Aorta (tissue), 5 donors: ENCODE measurements at regions of chr5 and their contacts with region 1.

Region 1: GRCh38 chr5:88883059-88883835 is at the start of gene MEF2C:
- DNase-seq: peak; percentile 81 to 92
- ATAC-seq: peak; percentile 90
- H3K4me3 ChIP-seq: peak within 1 kb of the TSS; percentile 100
- H3K27ac ChIP-seq: peak within 1 kb of the TSS; percentile 73 to 99
- H3K4me1 ChIP-seq: peaks cover 0 to 1% of the 10 kb centered on the region in 2 donors
- H3K27me3 ChIP-seq: no peaks in the 10 kb centered on the region
- total RNA-seq, gene MEF2C: 137 to 186 TPM

Region 2: GRCh38 chr5:88785391-88786219 is 97.6 kb before region 1 on chr5:
- intact Hi-C with region 1: loop called (anchors 5 kb)
- DNase-seq: no peak
- ATAC-seq: peak; percentile 93
- H3K4me3 ChIP-seq: peak overlapping the region in 1 of 2 donors; percentile 33
- H3K27ac ChIP-seq: peak overlapping the region; percentile 54 to 96
- H3K4me1 ChIP-seq: peaks cover 0 to 2% of the 10 kb centered on the region in 2 donors
- H3K27me3 ChIP-seq: no peaks in the 10 kb centered on the region

Region 3: DNA sequence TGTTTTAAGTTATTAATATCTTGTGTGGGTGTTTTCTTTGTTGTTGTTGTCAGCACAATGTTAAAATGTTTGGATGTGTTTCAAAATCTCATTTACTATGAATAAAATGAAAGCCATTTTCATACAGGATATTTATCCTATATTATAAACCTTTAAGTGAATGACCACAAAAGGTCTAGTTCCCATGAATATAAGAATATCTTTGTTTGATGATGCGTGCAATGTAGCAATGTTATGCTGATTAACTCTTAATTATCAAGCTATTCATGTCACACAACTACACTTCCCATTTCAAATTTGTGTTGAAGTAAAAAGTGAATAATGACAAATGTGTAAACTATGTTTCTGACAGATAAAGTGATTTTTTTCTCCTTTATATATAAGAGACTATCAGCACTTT is 60.0 kb before region 1 on chr5:
- intact Hi-C with region 1: no loop called
- DNase-seq: no peak
- ATAC-seq: no peak
- H3K4me3 ChIP-seq: no peak overlapping the region
- H3K27ac ChIP-seq: no peak overlapping the region
- H3K4me1 ChIP-seq: peaks cover 3 to 5% of the 10 kb centered on the region in 2 donors
- H3K27me3 ChIP-seq: no peaks in the 10 kb centered on the region

Region 4: DNA sequence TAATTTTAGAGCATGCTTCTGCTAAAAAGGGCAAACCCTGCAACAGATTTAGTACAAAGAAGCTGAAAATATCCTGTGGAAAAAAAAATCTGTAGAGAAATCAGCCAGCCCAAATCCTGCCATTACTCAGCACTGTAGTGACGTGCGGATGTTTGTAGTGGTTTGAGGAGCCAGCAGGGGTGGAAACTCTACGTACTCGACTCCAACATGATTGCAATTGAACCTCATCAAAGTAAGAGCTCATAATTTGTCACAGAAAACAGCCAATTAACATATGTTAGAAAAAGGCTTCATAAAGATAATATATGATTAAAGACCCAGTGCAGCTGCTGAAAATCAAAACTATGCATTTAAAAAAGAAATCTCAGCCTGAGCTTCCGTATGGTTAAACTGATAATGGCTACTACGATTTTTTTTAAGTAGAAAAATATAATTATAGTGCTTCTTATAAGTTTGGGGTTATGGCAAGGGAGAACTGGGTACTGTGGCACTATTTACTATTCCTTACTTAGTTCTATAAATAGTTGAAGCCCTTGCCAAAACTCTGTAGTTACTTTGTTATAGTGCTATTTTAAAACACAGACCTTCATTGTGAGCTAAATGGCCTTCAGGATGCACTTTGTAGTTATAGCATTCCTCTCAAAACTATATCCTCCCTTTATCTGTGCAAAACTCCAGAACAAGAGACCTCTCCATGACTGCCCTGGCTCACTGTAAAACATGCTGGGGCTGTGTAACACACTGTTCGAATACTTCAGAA is 49.7 kb before region 1 on chr5:
- intact Hi-C with region 1: loop called (anchors 1 to 5 kb)
- DNase-seq: peak in 1 of 2 donors; percentile 58
- ATAC-seq: peak; percentile 87
- H3K4me3 ChIP-seq: peak overlapping the region in 1 of 2 donors; percentile 82
- H3K27ac ChIP-seq: peak overlapping the region; percentile 71 to 93
- H3K4me1 ChIP-seq: peaks cover 9% of the 10 kb centered on the region in 2 donors
- H3K27me3 ChIP-seq: no peaks in the 10 kb centered on the region

Region 5: GRCh38 chr5:88845081-88845697 is 38.1 kb before region 1 on chr5:
- intact Hi-C with region 1: no loop called
- DNase-seq: no peak
- ATAC-seq: no peak
- H3K4me3 ChIP-seq: no peak overlapping the region
- H3K27ac ChIP-seq: no peak overlapping the region
- H3K4me1 ChIP-seq: peaks cover 0 to under 1% of the 10 kb centered on the region in 2 donors
- H3K27me3 ChIP-seq: no peaks in the 10 kb centered on the region

Region 6: DNA sequence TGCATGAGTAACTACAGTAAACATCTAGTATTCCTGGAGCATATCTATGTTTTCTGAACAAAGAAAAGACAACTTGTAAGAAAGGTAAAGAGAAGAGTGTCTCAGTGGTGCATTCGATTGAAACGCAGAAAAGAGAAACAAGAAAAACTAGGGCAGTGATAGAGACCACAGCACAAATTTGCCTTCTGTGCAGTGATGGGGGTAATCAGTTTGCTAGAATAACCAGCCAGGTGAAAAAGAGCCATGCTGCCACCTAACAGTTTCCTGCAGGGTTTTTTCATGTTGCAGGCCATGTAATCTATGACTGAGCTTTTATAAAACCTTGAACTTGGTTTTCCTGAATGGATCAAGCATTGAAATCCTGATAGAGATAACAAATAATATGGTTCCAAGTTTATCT is 198.1 kb after region 1 on chr5:
- intact Hi-C with region 1: loop called (anchors 2 to 10 kb)
- DNase-seq: no peak
- ATAC-seq: no peak
- H3K4me3 ChIP-seq: no peak overlapping the region
- H3K27ac ChIP-seq: no peak overlapping the region
- H3K4me1 ChIP-seq: peaks cover 0 to 2% of the 10 kb centered on the region in 2 donors
- H3K27me3 ChIP-seq: no peaks in the 10 kb centered on the region

Region 7: GRCh38 chr5:89187883-89188465 is 304.7 kb after region 1 on chr5:
- intact Hi-C with region 1: no loop called
- DNase-seq: no peak
- ATAC-seq: no peak
- H3K4me3 ChIP-seq: no peak overlapping the region
- H3K27ac ChIP-seq: no peak overlapping the region
- H3K4me1 ChIP-seq: peaks cover 0 to 2% of the 10 kb centered on the region in 2 donors
- H3K27me3 ChIP-seq: no peaks in the 10 kb centered on the region

Region 8: GRCh38 chr5:89457411-89458331 is 574.4 kb after region 1 on chr5:
- intact Hi-C with region 1: loop called in 1 of 2 experiments (anchors 10 kb)
- DNase-seq: peak; percentile 79 to 81
- ATAC-seq: peak; percentile 92
- H3K4me3 ChIP-seq: no peak overlapping the region
- H3K27ac ChIP-seq: peak overlapping the region; percentile 17 to 51
- H3K4me1 ChIP-seq: no peaks in the 10 kb centered on the region
- H3K27me3 ChIP-seq: no peaks in the 10 kb centered on the region

Region 9: DNA sequence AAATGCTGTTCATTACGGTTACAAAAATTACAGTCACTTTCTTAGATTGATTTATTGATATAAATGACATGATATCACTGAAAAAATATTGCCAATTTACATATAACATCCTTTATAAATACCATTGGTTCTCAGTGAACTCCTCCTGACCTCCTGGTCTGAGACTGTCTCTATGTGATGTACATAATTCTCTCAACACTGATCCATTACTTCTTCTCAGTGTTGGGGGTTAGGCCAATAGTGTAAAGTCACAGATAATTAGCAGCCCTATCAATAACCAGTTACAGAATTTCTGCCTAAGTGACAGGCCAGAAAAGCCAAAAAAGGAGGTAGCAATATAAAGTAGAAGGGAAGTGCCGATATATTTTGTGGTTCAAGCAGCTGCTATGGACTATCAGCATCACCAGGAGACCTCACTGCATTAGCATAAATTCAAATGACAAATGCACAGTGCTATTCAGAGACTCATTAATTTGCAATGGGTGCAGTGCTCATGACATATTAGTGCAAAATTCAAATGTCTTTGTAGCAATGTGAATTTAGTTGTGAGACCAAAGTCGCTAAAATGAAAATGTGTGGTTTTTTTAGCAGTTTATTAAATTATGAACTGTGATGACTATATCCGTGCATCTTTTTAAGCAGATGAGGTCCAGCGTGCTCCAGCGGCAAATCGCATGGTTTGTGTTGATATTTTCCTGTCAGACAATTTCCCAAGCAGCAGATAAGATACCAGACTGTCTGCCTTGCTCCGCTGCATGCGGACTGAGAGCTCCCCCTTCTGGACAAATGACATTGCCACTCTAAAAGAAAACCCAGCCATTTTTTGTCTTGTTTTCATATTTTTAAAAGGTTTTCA is 1381.7 kb after region 1 on chr5:
- intact Hi-C with region 1: loop called (anchors 5 to 10 kb)
- DNase-seq: peak; percentile 67 to 80
- ATAC-seq: peak; percentile 84
- H3K4me3 ChIP-seq: no peak overlapping the region
- H3K27ac ChIP-seq: no peak overlapping the region
- H3K4me1 ChIP-seq: peaks cover 0 to 2% of the 10 kb centered on the region in 2 donors
- H3K27me3 ChIP-seq: no peaks in the 10 kb centered on the region